B cell (primary cell): ENCODE measurements at regions of chr1 and their contacts with region 1.

Region 1: GRCh38 chr1:110780600-110781484 is 92.1 kb upstream of the CD53 start:
- DNase-seq: peak; percentile 91
- ATAC-seq: peak; percentile 76
- H3K4me3 ChIP-seq: peak overlapping the region in 1 of 5 experiments; percentile 11
- H3K4me3 Mint-ChIP-seq: peak overlapping the region; percentile 52
- H3K27ac ChIP-seq: no peak overlapping the region
- H3K27ac Mint-ChIP-seq: peak overlapping the region; percentile 65
- H3K4me1 ChIP-seq: peaks cover 38 to 40% of the 10 kb centered on the region in 2 donors
- H3K4me1 Mint-ChIP-seq: peaks cover 42% of the 10 kb centered on the region
- H3K27me3 ChIP-seq: peaks cover 0 to 3% (median 0%) of the 10 kb centered on the region in 4 experiments
- H3K27me3 Mint-ChIP-seq: peaks cover 8% of the 10 kb centered on the region
- CTCF ChIP-seq: peak; percentile 86

Region 2: GRCh38 chr1:110524311-110525251 is 256.3 kb before region 1 on chr1:
- CTCF ChIA-PET with region 1: interaction called, 8 read pairs
- POLR2A ChIA-PET with region 1: no interaction called
- intact Hi-C with region 1: loop called (anchors 1 kb)
- DNase-seq: peak; percentile 60
- ATAC-seq: peak; percentile 43
- H3K4me3 ChIP-seq: no peak overlapping the region
- H3K4me3 Mint-ChIP-seq: no peak overlapping the region
- H3K27ac ChIP-seq: no peak overlapping the region
- H3K27ac Mint-ChIP-seq: no peak overlapping the region
- H3K4me1 ChIP-seq: peaks cover 3 to 6% of the 10 kb centered on the region in 2 donors
- H3K4me1 Mint-ChIP-seq: peaks cover 3% of the 10 kb centered on the region
- H3K27me3 ChIP-seq: peaks cover 0 to 25% (median 5%) of the 10 kb centered on the region in 4 experiments
- H3K27me3 Mint-ChIP-seq: peaks cover 50% of the 10 kb centered on the region
- CTCF ChIP-seq: peak; percentile 68

Region 3: GRCh38 chr1:110619412-110620249 is 161.2 kb before region 1 on chr1:
- CTCF ChIA-PET with region 1: interaction called, 216 read pairs
- POLR2A ChIA-PET with region 1: interaction called, 3 read pairs
- intact Hi-C with region 1: loop called (anchors 1 kb)
- DNase-seq: peak; percentile 94
- ATAC-seq: peak; percentile 86
- H3K4me3 ChIP-seq: peak overlapping the region; percentile 16 to 77 (median 72)
- H3K4me3 Mint-ChIP-seq: peak overlapping the region; percentile 91
- H3K27ac ChIP-seq: peak overlapping the region; percentile 66 to 89
- H3K27ac Mint-ChIP-seq: peak overlapping the region; percentile 95
- H3K4me1 ChIP-seq: peaks cover 20 to 30% of the 10 kb centered on the region in 2 donors
- H3K4me1 Mint-ChIP-seq: peaks cover 30% of the 10 kb centered on the region
- H3K27me3 ChIP-seq: peaks cover 0 to 5% (median 2%) of the 10 kb centered on the region in 4 experiments
- H3K27me3 Mint-ChIP-seq: peaks cover 4% of the 10 kb centered on the region
- CTCF ChIP-seq: peak; percentile 95

Region 4: DNA sequence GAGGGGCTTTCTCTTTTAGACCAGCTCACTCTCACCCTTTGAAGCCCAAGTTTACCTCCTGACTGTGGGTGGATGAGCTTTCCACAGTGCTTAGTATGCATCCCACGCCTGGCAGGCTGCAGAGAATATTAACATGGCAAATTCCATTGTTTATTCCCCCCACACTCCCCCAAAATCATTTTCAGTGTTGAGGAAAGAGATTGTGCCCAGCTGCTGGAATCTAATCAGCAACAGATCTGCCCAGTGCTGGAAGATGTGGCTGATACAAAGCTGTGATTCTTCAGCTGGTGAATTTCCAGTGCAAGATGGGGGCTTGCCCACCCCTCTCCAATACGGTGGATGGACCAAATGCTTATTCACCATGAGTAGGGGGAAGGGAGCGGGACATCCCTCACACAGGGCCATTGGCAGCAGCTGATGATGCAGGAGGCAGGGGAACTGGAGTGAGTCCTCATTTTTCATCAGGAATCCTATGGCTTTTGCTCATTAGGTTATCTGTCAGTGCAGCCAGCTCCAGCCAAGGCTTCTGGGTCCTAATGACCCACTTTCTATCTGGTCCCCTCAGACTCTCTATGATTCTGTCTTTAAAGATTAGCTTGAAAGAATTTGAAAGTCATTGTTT is 66.4 kb before region 1 on chr1:
- CTCF ChIA-PET with region 1: no interaction called
- POLR2A ChIA-PET with region 1: no interaction called
- intact Hi-C with region 1: no loop called
- DNase-seq: no peak
- ATAC-seq: no peak
- H3K4me3 ChIP-seq: no peak overlapping the region
- H3K4me3 Mint-ChIP-seq: no peak overlapping the region
- H3K27ac ChIP-seq: no peak overlapping the region
- H3K27ac Mint-ChIP-seq: no peak overlapping the region
- H3K4me1 ChIP-seq: no peaks in the 10 kb centered on the region
- H3K4me1 Mint-ChIP-seq: peaks cover 2% of the 10 kb centered on the region
- H3K27me3 ChIP-seq: no peaks in the 10 kb centered on the region
- H3K27me3 Mint-ChIP-seq: peaks cover 5% of the 10 kb centered on the region
- CTCF ChIP-seq: no peak

Region 5: DNA sequence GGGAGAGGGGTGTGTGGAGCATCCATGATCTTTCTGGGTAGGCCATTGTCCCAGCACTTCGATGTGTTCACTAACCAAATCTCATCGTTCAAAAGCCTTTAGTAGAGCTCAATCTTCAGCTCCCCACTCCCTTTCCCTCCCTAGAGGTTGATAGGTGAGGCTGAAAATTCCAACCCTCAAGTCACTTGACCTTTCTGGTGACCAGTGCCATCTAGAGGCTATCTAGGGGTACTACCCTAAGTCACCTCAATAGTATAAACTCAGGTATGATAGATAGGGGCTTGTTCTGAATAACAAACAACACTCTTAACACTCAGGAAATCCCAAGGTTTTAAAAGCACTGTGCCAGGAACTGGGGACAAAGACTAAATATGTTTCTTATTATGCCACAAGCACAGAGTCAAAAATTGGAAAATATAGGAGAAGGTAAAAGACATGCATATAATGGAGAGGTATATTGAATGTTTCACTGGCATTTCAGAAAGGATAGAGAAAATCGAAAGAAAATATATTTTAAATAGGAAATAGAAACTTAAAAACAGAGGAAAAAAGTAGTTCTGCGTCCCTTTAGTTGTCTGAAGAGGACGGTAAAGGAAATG is 49.2 kb after region 1 on chr1:
- CTCF ChIA-PET with region 1: interaction called, 146 read pairs
- POLR2A ChIA-PET with region 1: interaction called, 7 read pairs
- intact Hi-C with region 1: loop called (anchors 1 kb)
- DNase-seq: peak; percentile 74
- ATAC-seq: peak; percentile 88
- H3K4me3 ChIP-seq: no peak overlapping the region
- H3K4me3 Mint-ChIP-seq: no peak overlapping the region
- H3K27ac ChIP-seq: no peak overlapping the region
- H3K27ac Mint-ChIP-seq: no peak overlapping the region
- H3K4me1 ChIP-seq: peaks cover 8 to 9% of the 10 kb centered on the region in 2 donors
- H3K4me1 Mint-ChIP-seq: peaks cover 30% of the 10 kb centered on the region
- H3K27me3 ChIP-seq: no peaks in the 10 kb centered on the region
- H3K27me3 Mint-ChIP-seq: no peaks in the 10 kb centered on the region
- CTCF ChIP-seq: peak; percentile 94

Region 6: GRCh38 chr1:110986407-110986891 is 205.6 kb after region 1 on chr1:
- CTCF ChIA-PET with region 1: interaction called, 48 read pairs
- POLR2A ChIA-PET with region 1: no interaction called
- intact Hi-C with region 1: no loop called
- DNase-seq: no peak
- ATAC-seq: no peak
- H3K4me3 ChIP-seq: no peak overlapping the region
- H3K4me3 Mint-ChIP-seq: no peak overlapping the region
- H3K27ac ChIP-seq: no peak overlapping the region
- H3K27ac Mint-ChIP-seq: no peak overlapping the region
- H3K4me1 ChIP-seq: peaks cover 0 to 8% of the 10 kb centered on the region in 2 donors
- H3K4me1 Mint-ChIP-seq: peaks cover 7% of the 10 kb centered on the region
- H3K27me3 ChIP-seq: peaks cover 0 to 10% (median 4%) of the 10 kb centered on the region in 4 experiments
- H3K27me3 Mint-ChIP-seq: peaks cover 25% of the 10 kb centered on the region
- CTCF ChIP-seq: no peak

Region 7: GRCh38 chr1:111346089-111346885 is 565.4 kb after region 1 on chr1:
- CTCF ChIA-PET with region 1: no interaction called
- POLR2A ChIA-PET with region 1: no interaction called
- intact Hi-C with region 1: loop called (anchors 10 kb)
- DNase-seq: peak; percentile 98
- ATAC-seq: peak; percentile 85
- H3K4me3 ChIP-seq: peak overlapping the region; percentile 9 to 75 (median 66)
- H3K4me3 Mint-ChIP-seq: peak overlapping the region; percentile 97
- H3K27ac ChIP-seq: peak overlapping the region; percentile 71 to 78
- H3K27ac Mint-ChIP-seq: peak overlapping the region; percentile 95
- H3K4me1 ChIP-seq: peaks cover 9 to 16% of the 10 kb centered on the region in 2 donors
- H3K4me1 Mint-ChIP-seq: peaks cover 16% of the 10 kb centered on the region
- H3K27me3 ChIP-seq: no peaks in the 10 kb centered on the region
- H3K27me3 Mint-ChIP-seq: no peaks in the 10 kb centered on the region
- CTCF ChIP-seq: no peak